ENCODE measurements at regions of chr2 and their contacts with region 1.

Region 1: GRCh38 chr2:241686649-241687425 is at the start of gene DTYMK:
- DNase-seq: peak in 1 of 2 donors; percentile 95
- H3K4me3 ChIP-seq: peak within 1 kb of the TSS; percentile 80 to 99
- H3K27ac ChIP-seq: peak within 1 kb of the TSS; percentile 88
- H3K4me1 ChIP-seq: peaks cover 36% of the 10 kb centered on the region
- H3K27me3 ChIP-seq: no peaks in the 10 kb centered on the region
- CTCF ChIP-seq: peak in 1 of 3 experiments; percentile 1
- POLR2A ChIP-seq: peak in 1 of 2 donors; percentile 72
- total RNA-seq, gene DTYMK: 14.7 TPM

Region 2: GRCh38 chr2:241702132-241703031 is 15.5 kb after region 1 on chr2:
- intact Hi-C with region 1: loop called (anchors 2 kb)
- DNase-seq: no peak
- H3K4me3 ChIP-seq: peak overlapping the region; percentile 63 to 86
- H3K27ac ChIP-seq: peak overlapping the region; percentile 85
- H3K4me1 ChIP-seq: peaks cover 23% of the 10 kb centered on the region
- H3K27me3 ChIP-seq: no peaks in the 10 kb centered on the region
- CTCF ChIP-seq: peak in 2 of 3 experiments; percentile 20 to 29
- POLR2A ChIP-seq: no peak

Measured in vagina (tissue), 2 donors.